Activated CD4-positive, alpha-beta T cell treated with anti-CD3 and anti-CD28 coated beads, Interleukin-2, amount 10 ng/mL, durations not matched to agents 24 days and 14 days (primary cell): ENCODE measurements at regions of chrX and their contacts with region 1.

Region 1: DNA sequence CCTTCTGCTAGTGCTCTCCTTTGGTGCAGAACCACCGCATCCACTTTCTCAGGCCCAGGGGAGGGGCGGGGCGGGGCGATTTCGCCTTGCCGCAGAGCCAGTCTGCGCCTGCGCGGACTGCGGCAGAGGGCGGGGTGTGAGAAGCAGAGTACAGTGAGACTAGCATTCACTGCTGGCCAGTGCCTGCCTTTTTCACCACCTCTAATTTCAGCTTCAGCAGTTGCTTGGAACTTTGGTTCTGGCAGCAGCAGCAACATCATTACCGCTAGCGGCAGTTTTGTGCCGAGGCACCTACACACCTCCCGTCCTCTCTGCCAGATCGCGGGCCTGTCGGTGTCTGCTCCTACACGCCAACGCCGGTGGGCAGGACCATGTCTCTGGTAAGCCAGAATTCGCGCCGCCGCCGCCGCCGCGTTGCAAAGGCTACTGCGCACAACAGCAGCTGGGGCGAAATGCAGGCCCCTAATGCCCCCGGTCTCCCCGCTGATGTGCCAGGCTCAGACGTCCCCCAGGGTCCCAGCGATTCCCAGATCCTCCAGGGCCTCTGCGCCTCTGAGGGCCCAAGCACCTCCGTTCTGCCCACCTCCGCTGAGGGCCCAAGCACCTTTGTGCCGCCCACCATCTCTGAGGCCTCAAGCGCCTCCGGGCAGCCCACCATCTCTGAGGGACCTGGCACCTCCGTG is at the start of gene MAGEE1:
- DNase-seq: peak; percentile 92
- H3K4me3 Mint-ChIP-seq: peak within 1 kb of the TSS; percentile 88
- H3K27ac Mint-ChIP-seq: peak within 1 kb of the TSS; percentile 83
- H3K4me1 Mint-ChIP-seq: peaks cover 7% of the 10 kb centered on the region
- H3K27me3 Mint-ChIP-seq: no peaks in the 10 kb centered on the region
- total RNA-seq, gene MAGEE1: 1.8 and 2.0 TPM in 2 replicates

Region 2: DNA sequence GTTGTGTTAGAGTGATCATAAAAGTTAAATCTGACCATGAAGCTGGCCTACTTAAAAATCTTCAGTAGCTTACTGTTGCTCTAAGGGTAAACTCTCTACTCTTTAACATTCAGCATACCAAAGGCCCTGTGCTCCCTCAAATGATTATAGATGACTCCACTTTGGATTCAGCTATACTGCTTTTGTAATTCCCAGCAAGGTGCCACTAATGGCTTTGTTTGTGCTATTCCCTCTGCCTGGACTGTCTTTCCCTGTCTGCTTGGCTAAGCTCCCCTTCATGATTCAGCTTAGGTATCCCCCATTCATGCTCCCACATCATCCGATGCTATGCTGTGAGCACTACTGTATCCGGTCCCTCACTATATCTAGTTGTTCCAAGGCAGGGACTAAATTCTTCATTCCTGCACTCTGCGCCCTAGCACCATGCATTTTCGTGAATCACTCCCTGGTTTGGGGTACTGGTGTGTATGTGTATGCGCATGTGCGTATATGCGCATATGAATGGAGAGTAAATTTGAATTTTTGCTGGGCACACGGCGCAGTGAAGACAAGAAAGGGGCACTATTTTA is 255.3 kb before region 1 on chrX:
- intact Hi-C with region 1: loop called (anchors 5 kb)
- DNase-seq: no peak
- H3K4me3 Mint-ChIP-seq: peak overlapping the region; percentile 94
- H3K27ac Mint-ChIP-seq: peak overlapping the region; percentile 99
- H3K4me1 Mint-ChIP-seq: peaks cover 37% of the 10 kb centered on the region
- H3K27me3 Mint-ChIP-seq: no peaks in the 10 kb centered on the region